ENCODE measurements at regions of chr9 and their contacts with region 1.

Region 1: GRCh38 chr9:109119439-109120203 is at the start of gene TMEM245:
- DNase-seq: peak; percentile 97
- ATAC-seq: peak; percentile 96
- H3K4me3 ChIP-seq: peak within 1 kb of the TSS; percentile 63 to 89 (median 74)
- H3K4me3 Mint-ChIP-seq: peak within 1 kb of the TSS; percentile 91
- H3K27ac ChIP-seq: peak within 1 kb of the TSS; percentile 24 to 81
- H3K27ac Mint-ChIP-seq: peak within 1 kb of the TSS; percentile 86
- H3K4me1 ChIP-seq: peaks cover 18 to 32% of the 10 kb centered on the region in 2 donors
- H3K4me1 Mint-ChIP-seq: peaks cover 30% of the 10 kb centered on the region
- H3K27me3 ChIP-seq: no peaks in the 10 kb centered on the region
- H3K27me3 Mint-ChIP-seq: no peaks in the 10 kb centered on the region
- CTCF ChIP-seq: no peak
- total RNA-seq, gene TMEM245: 33.4 and 34.3 TPM in 2 replicates

Region 2: GRCh38 chr9:109012876-109013678 is 106.5 kb before region 1 on chr9 and contains the start of gene CTNNAL1:
- CTCF ChIA-PET with region 1: no interaction called
- POLR2A ChIA-PET with region 1: interaction called, 4 read pairs
- intact Hi-C with region 1: loop called (anchors 1 kb)
- DNase-seq: peak; percentile 87
- ATAC-seq: peak; percentile 97
- H3K4me3 ChIP-seq: peak within 1 kb of the TSS; percentile 43 to 80 (median 71)
- H3K4me3 Mint-ChIP-seq: peak within 1 kb of the TSS; percentile 94
- H3K27ac ChIP-seq: peak within 1 kb of the TSS; percentile 9 to 50
- H3K27ac Mint-ChIP-seq: peak within 1 kb of the TSS; percentile 90
- H3K4me1 ChIP-seq: peaks cover 16 to 19% of the 10 kb centered on the region in 2 donors
- H3K4me1 Mint-ChIP-seq: peaks cover 42% of the 10 kb centered on the region
- H3K27me3 ChIP-seq: peaks cover 0 to 16% (median 10%) of the 10 kb centered on the region in 4 experiments
- H3K27me3 Mint-ChIP-seq: peaks cover 6% of the 10 kb centered on the region
- CTCF ChIP-seq: no peak
- total RNA-seq, gene CTNNAL1: 1.5 and 2.3 TPM in 2 replicates

Region 3: DNA sequence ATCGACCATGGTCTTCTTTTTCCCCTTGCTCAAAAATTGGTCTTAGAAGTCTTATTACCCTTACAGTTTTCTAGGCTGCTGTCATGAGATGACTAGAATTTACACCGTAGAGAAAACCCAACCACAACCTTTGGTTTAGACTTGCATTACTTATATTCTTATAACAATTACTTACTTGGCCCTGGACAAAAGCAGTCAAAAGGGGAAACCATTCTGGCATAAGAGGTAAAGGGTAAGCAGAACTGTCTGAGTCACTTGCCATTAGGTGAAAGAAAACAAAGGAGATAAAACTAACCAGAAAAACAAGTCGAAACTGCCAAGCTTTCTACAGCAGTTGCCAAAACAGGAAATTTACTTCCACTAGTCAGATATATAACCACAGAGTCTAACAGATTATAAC is 17.8 kb before region 1 on chr9:
- CTCF ChIA-PET with region 1: no interaction called
- POLR2A ChIA-PET with region 1: interaction called, 6 read pairs
- intact Hi-C with region 1: loop called (anchors 2 kb)
- DNase-seq: no peak
- ATAC-seq: peak; percentile 28
- H3K4me3 ChIP-seq: no peak overlapping the region
- H3K4me3 Mint-ChIP-seq: peak overlapping the region; percentile 51
- H3K27ac ChIP-seq: peak overlapping the region in 1 of 2 donors; percentile 12
- H3K27ac Mint-ChIP-seq: peak overlapping the region; percentile 72
- H3K4me1 ChIP-seq: peaks cover 3 to 9% of the 10 kb centered on the region in 2 donors
- H3K4me1 Mint-ChIP-seq: peaks cover 37% of the 10 kb centered on the region
- H3K27me3 ChIP-seq: no peaks in the 10 kb centered on the region
- H3K27me3 Mint-ChIP-seq: no peaks in the 10 kb centered on the region
- CTCF ChIP-seq: no peak

Region 4: GRCh38 chr9:109139851-109140250 is 20.2 kb after region 1 on chr9:
- CTCF ChIA-PET with region 1: no interaction called
- POLR2A ChIA-PET with region 1: no interaction called
- intact Hi-C with region 1: no loop called
- DNase-seq: no peak
- ATAC-seq: no peak
- H3K4me3 ChIP-seq: no peak overlapping the region
- H3K4me3 Mint-ChIP-seq: no peak overlapping the region
- H3K27ac ChIP-seq: no peak overlapping the region
- H3K27ac Mint-ChIP-seq: no peak overlapping the region
- H3K4me1 ChIP-seq: no peaks in the 10 kb centered on the region
- H3K4me1 Mint-ChIP-seq: peaks cover 1% of the 10 kb centered on the region
- H3K27me3 ChIP-seq: no peaks in the 10 kb centered on the region
- H3K27me3 Mint-ChIP-seq: peaks cover 20% of the 10 kb centered on the region
- CTCF ChIP-seq: no peak